ENCODE measurements at regions of chr9 and their contacts with region 1.

Region 1: DNA sequence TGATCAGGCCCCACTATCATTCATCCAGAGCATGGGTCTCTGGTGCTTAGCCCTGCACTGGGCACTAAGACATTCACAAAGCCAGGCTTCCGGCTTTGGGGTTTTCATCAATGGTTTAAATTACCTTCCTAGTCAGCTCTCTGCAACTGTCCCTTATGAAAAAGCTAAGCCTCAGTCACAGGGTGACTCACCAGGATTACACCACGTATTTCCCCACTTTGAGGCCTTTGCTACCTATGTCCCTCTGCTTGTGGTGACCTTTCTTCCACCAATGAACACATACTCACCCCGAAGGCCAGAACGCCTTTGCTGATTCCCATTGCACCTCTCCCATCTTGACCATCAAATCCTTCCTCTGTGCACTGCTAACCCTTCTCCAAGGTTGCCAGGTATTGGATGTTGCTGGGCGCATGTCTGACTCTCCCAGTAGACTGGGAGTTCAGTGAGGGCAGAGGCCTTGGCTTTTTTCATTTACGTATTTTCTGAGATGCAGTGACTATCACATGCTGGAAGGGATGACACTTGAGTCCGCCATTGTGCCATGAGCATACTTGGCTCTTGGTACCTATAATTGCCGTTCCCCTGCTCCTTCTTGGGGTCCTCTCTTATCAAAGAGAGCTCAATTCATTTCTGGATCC is 58.7 kb upstream of the TNFSF8 start:
- DNase-seq: peak; percentile 26
- ATAC-seq: peak; percentile 82
- H3K4me3 ChIP-seq: no peak overlapping the region
- H3K27ac ChIP-seq: no peak overlapping the region
- H3K4me1 ChIP-seq: 0 out of 2 replicates have a peak, but pooled peaks cover 3% of the 10 kb centered on the region
- H3K27me3 ChIP-seq: no peaks in the 10 kb centered on the region; a peak in 1 of 4 replicates
- CTCF ChIP-seq: no peak
- EP300 ChIP-seq: no peak
- POLR2A ChIP-seq: no peak
- RAD21 ChIP-seq: no peak

Region 2: GRCh38 chr9:114929201-114929600 is 59.9 kb before region 1 on chr9:
- CTCF ChIA-PET with region 1: interaction called, 3 read pairs
- POLR2A ChIA-PET with region 1: no interaction called
- RAD21 ChIA-PET with region 1: interaction called, 12 read pairs
- SMC1A ChIA-PET with region 1: interaction called, 9 read pairs
- in situ Hi-C with region 1: no loop called
- intact Hi-C with region 1: no loop called
- DNase-seq: no peak
- ATAC-seq: peak; percentile 20; the same call in 1 of the 3 replicates
- H3K4me3 ChIP-seq: no peak overlapping the region
- H3K27ac ChIP-seq: no peak overlapping the region
- H3K4me1 ChIP-seq: peaks cover 5% of the 10 kb centered on the region; the same call in 1 of the 2 replicates
- H3K27me3 ChIP-seq: peaks cover 4 to 22% of the 10 kb centered on the region in 2 experiments
- CTCF ChIP-seq: no peak
- EP300 ChIP-seq: no peak
- POLR2A ChIP-seq: no peak
- RAD21 ChIP-seq: no peak

Region 3: GRCh38 chr9:114968671-114969070 is 20.4 kb before region 1 on chr9:
- CTCF ChIA-PET with region 1: interaction called, 8 read pairs
- POLR2A ChIA-PET with region 1: no interaction called
- RAD21 ChIA-PET with region 1: interaction called, 28 read pairs
- SMC1A ChIA-PET with region 1: interaction called, 46 read pairs
- in situ Hi-C with region 1: no loop called
- intact Hi-C with region 1: no loop called
- DNase-seq: no peak
- ATAC-seq: peak; percentile 85
- H3K4me3 ChIP-seq: no peak overlapping the region
- H3K27ac ChIP-seq: no peak overlapping the region
- H3K4me1 ChIP-seq: no peaks in the 10 kb centered on the region
- H3K27me3 ChIP-seq: no peaks in the 10 kb centered on the region; a peak in 1 of 4 replicates
- CTCF ChIP-seq: no peak
- EP300 ChIP-seq: no peak
- POLR2A ChIP-seq: no peak
- RAD21 ChIP-seq: no peak

Region 4: DNA sequence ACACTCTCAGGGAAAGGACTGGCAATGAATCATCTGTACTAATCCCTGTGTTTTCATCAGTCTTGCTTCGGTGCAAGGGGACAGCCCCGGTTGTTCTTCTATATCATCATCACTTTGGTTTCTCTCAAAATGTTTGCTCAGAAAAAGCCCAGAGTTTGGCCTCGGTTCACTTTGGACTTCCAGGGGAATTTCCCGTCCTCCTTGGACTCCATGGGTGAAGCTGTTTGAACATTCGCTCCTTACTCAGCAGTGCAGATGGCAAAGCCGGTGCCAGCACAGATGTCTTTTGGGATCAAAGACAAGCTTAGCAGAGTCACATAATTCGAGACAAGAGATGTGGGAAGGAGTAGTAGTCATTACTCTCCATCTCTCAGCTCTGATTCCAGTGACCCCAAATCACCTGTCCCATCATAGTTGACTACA is 11.1 kb after region 1 on chr9:
- CTCF ChIA-PET with region 1: interaction called, 3 read pairs
- POLR2A ChIA-PET with region 1: interaction called, 11 read pairs
- RAD21 ChIA-PET with region 1: interaction called, 7 read pairs
- SMC1A ChIA-PET with region 1: interaction called, 25 read pairs
- in situ Hi-C with region 1: no loop called
- intact Hi-C with region 1: no loop called
- DNase-seq: no peak
- ATAC-seq: peak; percentile 71
- H3K4me3 ChIP-seq: no peak overlapping the region
- H3K27ac ChIP-seq: no peak overlapping the region
- H3K4me1 ChIP-seq: no peaks in the 10 kb centered on the region
- H3K27me3 ChIP-seq: peaks cover 3 to 8% of the 10 kb centered on the region in 2 experiments; a peak in 2 of 4 replicates
- CTCF ChIP-seq: no peak
- EP300 ChIP-seq: no peak
- POLR2A ChIP-seq: no peak
- RAD21 ChIP-seq: no peak